ENCODE measurements at regions of chr6 and their contacts with region 1.

Region 1: DNA sequence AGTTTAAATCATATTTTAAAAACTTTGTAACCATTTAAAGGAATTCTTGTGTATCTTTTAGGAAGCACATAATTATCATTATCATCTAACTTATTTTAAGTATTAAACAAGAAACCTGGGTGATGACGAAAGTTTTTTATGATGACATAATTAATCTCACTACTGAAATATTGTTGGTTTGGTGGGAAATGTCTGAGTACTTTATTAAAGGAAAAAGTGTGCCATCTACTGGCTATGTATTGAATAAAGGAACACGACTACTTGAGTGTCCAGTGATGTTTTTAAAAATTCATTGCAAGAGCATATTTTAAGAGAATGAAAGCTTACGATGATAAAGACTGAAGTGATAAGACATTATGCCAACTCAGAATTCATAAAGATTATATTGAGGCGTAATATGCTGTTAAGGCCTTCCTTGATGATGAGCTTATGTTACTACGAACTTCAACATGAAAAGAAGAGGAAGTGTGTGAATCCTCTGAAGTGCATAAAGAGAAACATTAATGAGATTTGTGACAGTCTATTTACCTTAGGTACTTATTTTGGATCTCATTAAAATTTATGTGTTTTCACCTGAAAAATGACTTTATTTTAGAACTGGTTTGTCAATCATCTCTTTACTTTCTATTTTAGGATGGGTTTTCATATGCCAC is 12.0 kb upstream of the TRMT11 start:
- DNase-seq: no peak
- ATAC-seq: peak in 1 of 4 donors; percentile 74
- H3K4me3 ChIP-seq: no peak overlapping the region
- H3K27ac ChIP-seq: no peak overlapping the region
- H3K4me1 ChIP-seq: no peaks in the 10 kb centered on the region
- H3K27me3 ChIP-seq: no peaks in the 10 kb centered on the region
- CTCF ChIP-seq: peak; percentile 48

Region 2: GRCh38 chr6:125790358-125791150 is 183.8 kb before region 1 on chr6 and contains the start of gene NCOA7:
- intact Hi-C with region 1: loop called in 1 of 2 experiments (anchors 5 kb)
- DNase-seq: peak; percentile 83 to 91
- ATAC-seq: peak; percentile 86 to 92 (median 92)
- H3K4me3 ChIP-seq: peak within 1 kb of the TSS; percentile 89
- H3K27ac ChIP-seq: peak within 1 kb of the TSS; percentile 91
- H3K4me1 ChIP-seq: peaks cover 13% of the 10 kb centered on the region
- H3K27me3 ChIP-seq: no peaks in the 10 kb centered on the region
- CTCF ChIP-seq: no peak
- total RNA-seq, gene NCOA7: 8.2 to 22.5 (median 13.2) TPM

Region 3: DNA sequence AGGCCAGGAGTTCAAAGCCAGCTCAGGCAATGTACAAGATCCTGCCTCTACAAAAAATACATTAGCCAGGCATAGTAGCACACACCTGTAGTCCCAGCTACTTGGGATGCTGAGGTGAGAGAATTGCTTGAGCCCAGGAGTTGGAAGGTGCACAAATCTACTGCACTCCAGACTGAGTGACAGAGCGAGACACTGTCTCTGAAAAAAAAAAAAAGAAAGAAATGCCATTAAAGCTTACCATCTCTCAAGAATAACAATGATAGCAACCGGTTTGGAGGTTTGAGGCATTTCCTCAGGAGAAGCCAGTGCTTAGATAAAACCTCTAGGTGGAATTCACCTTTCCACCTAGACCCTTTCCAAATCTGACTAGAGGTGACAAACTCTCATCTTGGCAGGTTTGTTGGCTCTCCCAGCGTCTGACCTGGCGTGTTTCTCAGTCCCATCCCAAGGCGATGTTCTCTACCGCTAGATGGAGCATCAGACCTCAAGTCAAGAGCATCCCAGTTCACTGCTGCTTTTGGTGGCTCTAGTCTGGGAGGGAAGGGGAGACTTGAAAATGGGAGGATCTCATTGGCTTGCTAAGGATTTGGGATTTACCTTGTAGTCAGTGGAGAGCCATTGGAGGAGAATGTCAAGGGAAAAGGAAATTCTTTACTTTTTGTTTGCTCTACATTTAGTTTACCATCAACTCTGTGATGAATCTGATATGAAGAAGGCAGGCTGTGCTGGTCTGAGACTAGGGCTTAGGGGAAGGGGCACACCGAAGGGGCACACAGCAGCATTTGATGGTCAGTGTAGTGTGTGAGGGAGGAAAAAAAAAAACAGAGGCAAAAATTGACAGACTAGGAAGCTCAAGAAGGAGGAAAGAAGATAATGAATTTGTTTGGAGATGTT is 115.7 kb before region 1 on chr6:
- intact Hi-C with region 1: loop called (anchors 5 to 10 kb)
- DNase-seq: no peak
- ATAC-seq: peak; percentile 48 to 84 (median 69)
- H3K4me3 ChIP-seq: no peak overlapping the region
- H3K27ac ChIP-seq: no peak overlapping the region
- H3K4me1 ChIP-seq: no peaks in the 10 kb centered on the region
- H3K27me3 ChIP-seq: no peaks in the 10 kb centered on the region
- CTCF ChIP-seq: peak; percentile 68

Measured in psoas muscle (tissue), 8 donors.